PC-3 (cell line): ENCODE measurements at regions of chr5 and their contacts with region 1.

Region 1: GRCh38 chr5:13831351-13831750 is 113.1 kb downstream of the DNAH5 start:
- DNase-seq: peak; percentile 72
- ATAC-seq: peak; percentile 99
- H3K4me3 ChIP-seq: no peak overlapping the region
- H3K27ac ChIP-seq: no peak overlapping the region
- H3K4me1 ChIP-seq: peaks cover 6% of the 10 kb centered on the region
- H3K27me3 ChIP-seq: no peaks in the 10 kb centered on the region
- CTCF ChIP-seq: peak; percentile 80

Region 2: GRCh38 chr5:12934722-12935121 is 896.6 kb before region 1 on chr5:
- CTCF ChIA-PET with region 1: no interaction called
- POLR2A ChIA-PET with region 1: no interaction called
- intact Hi-C with region 1: loop called (anchors 10 kb)
- DNase-seq: peak; percentile 96
- ATAC-seq: peak; percentile 87
- H3K4me3 ChIP-seq: no peak overlapping the region
- H3K27ac ChIP-seq: no peak overlapping the region
- H3K4me1 ChIP-seq: peaks cover 14% of the 10 kb centered on the region
- H3K27me3 ChIP-seq: no peaks in the 10 kb centered on the region
- CTCF ChIP-seq: no peak

Region 3: DNA sequence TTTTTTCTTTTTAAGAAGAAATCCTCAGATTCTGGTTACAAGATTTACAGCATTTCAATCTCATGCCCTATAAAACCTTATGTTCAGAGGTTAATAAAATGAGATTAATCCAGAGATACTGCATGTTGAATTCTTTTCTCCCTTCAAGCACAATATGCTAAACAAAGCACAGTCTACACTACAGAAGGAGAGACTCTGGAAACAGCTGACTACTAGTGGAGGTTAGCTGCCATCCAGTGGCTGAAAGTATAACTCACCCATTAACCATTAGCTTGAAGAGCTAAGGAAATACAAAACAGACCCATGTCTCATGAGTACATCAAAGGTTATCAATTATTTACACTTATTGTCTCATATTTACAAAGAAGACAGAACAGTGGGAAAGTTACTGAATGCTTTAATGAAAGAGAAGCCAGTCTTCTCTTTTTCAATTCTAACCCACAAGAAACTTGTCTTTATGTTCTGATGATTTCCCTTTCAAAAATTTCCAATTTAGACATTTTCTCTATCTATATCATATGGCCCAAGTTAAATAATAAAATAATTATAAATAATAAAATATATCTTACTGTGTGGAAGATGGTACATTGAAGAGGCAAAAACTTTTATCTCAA is 125.8 kb after region 1 on chr5:
- CTCF ChIA-PET with region 1: interaction called, 3 read pairs
- POLR2A ChIA-PET with region 1: no interaction called
- intact Hi-C with region 1: loop called (anchors 1 kb)
- DNase-seq: peak; percentile 91
- ATAC-seq: peak; percentile 100
- H3K4me3 ChIP-seq: no peak overlapping the region
- H3K27ac ChIP-seq: no peak overlapping the region
- H3K4me1 ChIP-seq: no peaks in the 10 kb centered on the region
- H3K27me3 ChIP-seq: no peaks in the 10 kb centered on the region
- CTCF ChIP-seq: peak; percentile 97